Vagina (tissue), 2 donors: ENCODE measurements at regions of chr15 and their contacts with region 1.

Region 1: GRCh38 chr15:73321496-73322450 is 47.0 kb downstream of the HCN4 start:
- DNase-seq: no peak
- H3K4me3 ChIP-seq: no peak overlapping the region
- H3K27ac ChIP-seq: no peak overlapping the region
- H3K4me1 ChIP-seq: no peaks in the 10 kb centered on the region
- H3K27me3 ChIP-seq: no peaks in the 10 kb centered on the region
- CTCF ChIP-seq: no peak
- POLR2A ChIP-seq: no peak

Region 2: GRCh38 chr15:74350295-74351290 is 1028.8 kb after region 1 on chr15:
- intact Hi-C with region 1: loop called (anchors 5 kb)
- DNase-seq: no peak
- H3K4me3 ChIP-seq: no peak overlapping the region
- H3K27ac ChIP-seq: no peak overlapping the region
- H3K4me1 ChIP-seq: no peaks in the 10 kb centered on the region
- H3K27me3 ChIP-seq: no peaks in the 10 kb centered on the region
- CTCF ChIP-seq: no peak
- POLR2A ChIP-seq: no peak